Naive thymus-derived CD4-positive, alpha-beta T cell (primary cell): ENCODE measurements at regions of chr16 and their contacts with region 1.

Region 1: GRCh38 chr16:3578610-3579551 is 1.7 kb upstream of the NLRC3 start:
- DNase-seq: peak in 5 of 9 donors; percentile 15 to 70 (median 29)
- ATAC-seq: peak; percentile 64
- H3K4me3 ChIP-seq: peak overlapping the region; percentile 39
- H3K4me3 Mint-ChIP-seq: peak overlapping the region; percentile 82 to 100 (median 98)
- H3K27ac ChIP-seq: peak overlapping the region; percentile 90
- H3K27ac Mint-ChIP-seq: peak overlapping the region; percentile 83 to 97 (median 95)
- H3K4me1 ChIP-seq: peaks cover 27 to 36% of the 10 kb centered on the region in 2 donors
- H3K4me1 Mint-ChIP-seq: peaks cover 19 to 59% (median 47%) of the 10 kb centered on the region in 7 donors
- H3K27me3 ChIP-seq: no peaks in the 10 kb centered on the region
- H3K27me3 Mint-ChIP-seq: no peaks in the 10 kb centered on the region

Region 2: DNA sequence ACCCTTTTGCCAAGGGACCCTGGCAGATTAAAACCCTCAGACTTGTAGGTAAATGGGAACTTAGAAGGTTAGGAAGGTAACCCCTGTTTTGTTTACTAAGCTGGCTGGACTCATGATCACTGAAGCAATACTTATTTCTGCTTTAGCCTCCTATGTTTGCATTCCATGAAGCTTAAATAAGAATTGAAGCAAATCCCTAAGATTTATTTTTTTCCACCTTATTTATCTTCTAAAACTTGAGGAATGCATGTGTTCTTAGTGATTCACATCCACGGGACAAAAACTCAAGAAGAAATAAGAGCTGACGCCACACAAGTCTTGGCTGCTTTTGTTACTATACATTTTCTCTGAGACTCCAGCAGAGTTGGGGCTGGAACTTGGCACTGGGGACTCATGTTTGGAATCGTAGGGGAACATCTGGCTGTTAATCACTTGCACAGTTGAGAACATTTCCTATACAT is 42.6 kb before region 1 on chr16:
- CTCF ChIA-PET with region 1: no interaction called
- POLR2A ChIA-PET with region 1: interaction called, 3 read pairs
- intact Hi-C with region 1: loop called in 1 of 2 experiments (anchors 5 kb)
- DNase-seq: no peak
- ATAC-seq: no peak
- H3K4me3 ChIP-seq: no peak overlapping the region
- H3K4me3 Mint-ChIP-seq: no peak overlapping the region
- H3K27ac ChIP-seq: no peak overlapping the region
- H3K27ac Mint-ChIP-seq: peak overlapping the region in 8 of 9 donors; percentile 21 to 89 (median 64)
- H3K4me1 ChIP-seq: no peaks in the 10 kb centered on the region
- H3K4me1 Mint-ChIP-seq: peaks cover 4 to 19% (median 11%) of the 10 kb centered on the region in 7 donors
- H3K27me3 ChIP-seq: no peaks in the 10 kb centered on the region
- H3K27me3 Mint-ChIP-seq: no peaks in the 10 kb centered on the region

Region 3: DNA sequence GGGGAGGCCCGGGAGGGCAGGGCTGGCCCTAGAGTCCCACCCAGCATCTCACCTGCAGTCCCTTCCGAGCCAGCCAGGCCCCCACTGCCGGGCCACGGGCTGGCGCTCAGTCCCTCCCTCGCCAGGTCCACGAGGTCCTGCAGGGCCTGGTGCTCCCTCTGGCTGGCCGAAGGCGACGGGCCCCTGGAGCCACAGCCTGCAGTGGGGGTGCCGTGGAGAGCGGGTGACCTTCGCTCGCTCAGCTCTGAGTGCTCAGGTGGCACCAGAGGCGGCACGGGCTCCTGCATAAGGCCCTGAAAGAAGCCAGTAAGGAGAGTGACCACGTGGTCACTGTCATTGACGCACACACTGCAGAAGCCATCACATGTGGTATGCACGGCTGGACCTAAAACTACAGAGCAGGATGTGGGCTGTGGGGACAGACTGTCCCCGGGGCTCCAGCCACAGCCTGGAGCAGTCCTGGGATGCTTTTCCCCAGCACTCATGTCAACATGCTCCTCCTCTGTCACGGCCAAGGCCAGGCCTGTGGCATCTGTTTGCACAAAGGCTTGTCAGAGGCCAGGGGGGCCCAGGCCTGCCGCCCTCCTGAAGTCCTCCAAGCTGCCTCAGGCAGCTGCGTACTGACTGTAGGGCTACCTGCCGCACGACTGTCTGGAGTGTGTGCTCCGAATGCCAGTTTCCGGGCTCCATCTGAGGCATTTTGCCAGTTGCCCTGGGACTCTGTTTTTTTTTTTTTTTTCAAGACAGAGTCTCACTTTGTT is 17.4 kb after region 1 on chr16:
- CTCF ChIA-PET with region 1: no interaction called
- POLR2A ChIA-PET with region 1: no interaction called
- intact Hi-C with region 1: no loop called
- DNase-seq: no peak
- ATAC-seq: no peak
- H3K4me3 ChIP-seq: no peak overlapping the region
- H3K4me3 Mint-ChIP-seq: no peak overlapping the region
- H3K27ac ChIP-seq: no peak overlapping the region
- H3K27ac Mint-ChIP-seq: no peak overlapping the region
- H3K4me1 ChIP-seq: no peaks in the 10 kb centered on the region
- H3K4me1 Mint-ChIP-seq: peaks cover 0 to 5% (median 0%) of the 10 kb centered on the region in 7 donors
- H3K27me3 ChIP-seq: no peaks in the 10 kb centered on the region
- H3K27me3 Mint-ChIP-seq: no peaks in the 10 kb centered on the region